CD4-positive, alpha-beta memory T cell (primary cell): ENCODE measurements at regions of chr12 and their contacts with region 1.

Region 1: GRCh38 chr12:113965951-113966797 is at the start of gene RBM19:
- DNase-seq: peak; percentile 97 to 98 (median 98)
- H3K4me3 ChIP-seq: peak within 1 kb of the TSS; percentile 72 to 93
- H3K4me3 Mint-ChIP-seq: peak within 1 kb of the TSS; percentile 97 to 100 (median 98)
- H3K27ac ChIP-seq: peak within 1 kb of the TSS; percentile 64
- H3K27ac Mint-ChIP-seq: peak within 1 kb of the TSS; percentile 89 to 97 (median 96)
- H3K4me1 ChIP-seq: peaks cover 38% of the 10 kb centered on the region
- H3K4me1 Mint-ChIP-seq: peaks cover 29 to 59% (median 48%) of the 10 kb centered on the region in 4 donors
- H3K27me3 ChIP-seq: no peaks in the 10 kb centered on the region
- H3K27me3 Mint-ChIP-seq: no peaks in the 10 kb centered on the region
- total RNA-seq, gene RBM19: 71.0 to 78.4 TPM

Region 2: GRCh38 chr12:113673458-113674238 is 292.5 kb before region 1 on chr12:
- CTCF ChIA-PET with region 1: no interaction called
- POLR2A ChIA-PET with region 1: no interaction called
- intact Hi-C with region 1: no loop called
- DNase-seq: no peak
- H3K4me3 ChIP-seq: no peak overlapping the region
- H3K4me3 Mint-ChIP-seq: no peak overlapping the region
- H3K27ac ChIP-seq: no peak overlapping the region
- H3K27ac Mint-ChIP-seq: no peak overlapping the region
- H3K4me1 ChIP-seq: no peaks in the 10 kb centered on the region
- H3K4me1 Mint-ChIP-seq: peaks cover 0 to 1% (median 0%) of the 10 kb centered on the region in 4 donors
- H3K27me3 ChIP-seq: no peaks in the 10 kb centered on the region
- H3K27me3 Mint-ChIP-seq: peaks cover 17 to 25% of the 10 kb centered on the region in 2 donors

Region 3: DNA sequence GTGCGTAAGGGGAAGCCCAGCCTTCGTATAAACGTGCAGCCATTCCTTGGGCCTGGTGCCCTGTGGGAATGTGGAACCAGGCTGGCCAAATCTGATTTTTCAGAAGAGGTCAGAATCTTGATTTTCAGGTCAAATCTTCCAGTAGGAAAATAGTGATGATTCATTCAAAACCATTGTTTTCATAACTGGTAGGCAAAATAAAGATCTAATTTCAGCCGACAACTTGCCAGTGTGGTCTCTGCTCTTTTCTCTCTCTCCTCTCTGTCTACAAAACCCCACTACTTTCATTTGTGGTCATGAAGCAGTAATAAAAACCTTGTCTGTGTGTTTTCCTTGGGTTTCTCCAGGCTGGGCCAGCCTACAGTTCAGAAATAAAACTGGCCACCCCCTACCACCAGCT is 135.2 kb before region 1 on chr12:
- CTCF ChIA-PET with region 1: no interaction called
- POLR2A ChIA-PET with region 1: no interaction called
- intact Hi-C with region 1: no loop called
- DNase-seq: no peak
- H3K4me3 ChIP-seq: no peak overlapping the region
- H3K4me3 Mint-ChIP-seq: no peak overlapping the region
- H3K27ac ChIP-seq: no peak overlapping the region
- H3K27ac Mint-ChIP-seq: peak overlapping the region in 1 of 7 donors; percentile 42
- H3K4me1 ChIP-seq: no peaks in the 10 kb centered on the region
- H3K4me1 Mint-ChIP-seq: no peaks in the 10 kb centered on the region
- H3K27me3 ChIP-seq: no peaks in the 10 kb centered on the region
- H3K27me3 Mint-ChIP-seq: no peaks in the 10 kb centered on the region

Region 4: GRCh38 chr12:113955109-113955970 is 10.8 kb before region 1 on chr12:
- CTCF ChIA-PET with region 1: interaction called, 12 read pairs
- POLR2A ChIA-PET with region 1: no interaction called
- intact Hi-C with region 1: no loop called
- DNase-seq: no peak
- H3K4me3 ChIP-seq: no peak overlapping the region
- H3K4me3 Mint-ChIP-seq: no peak overlapping the region
- H3K27ac ChIP-seq: no peak overlapping the region
- H3K27ac Mint-ChIP-seq: no peak overlapping the region
- H3K4me1 ChIP-seq: no peaks in the 10 kb centered on the region
- H3K4me1 Mint-ChIP-seq: peaks cover 0 to 4% (median 0%) of the 10 kb centered on the region in 4 donors
- H3K27me3 ChIP-seq: no peaks in the 10 kb centered on the region
- H3K27me3 Mint-ChIP-seq: no peaks in the 10 kb centered on the region

Region 5: GRCh38 chr12:113980537-113981337 is 14.6 kb after region 1 on chr12:
- CTCF ChIA-PET with region 1: interaction called, 30 read pairs
- POLR2A ChIA-PET with region 1: no interaction called
- intact Hi-C with region 1: no loop called
- DNase-seq: peak in 3 of 5 donors; percentile 10 to 15 (median 12)
- H3K4me3 ChIP-seq: no peak overlapping the region
- H3K4me3 Mint-ChIP-seq: no peak overlapping the region
- H3K27ac ChIP-seq: no peak overlapping the region
- H3K27ac Mint-ChIP-seq: no peak overlapping the region
- H3K4me1 ChIP-seq: no peaks in the 10 kb centered on the region
- H3K4me1 Mint-ChIP-seq: no peaks in the 10 kb centered on the region
- H3K27me3 ChIP-seq: no peaks in the 10 kb centered on the region
- H3K27me3 Mint-ChIP-seq: peaks cover 23 to 34% of the 10 kb centered on the region in 2 donors

Region 6: DNA sequence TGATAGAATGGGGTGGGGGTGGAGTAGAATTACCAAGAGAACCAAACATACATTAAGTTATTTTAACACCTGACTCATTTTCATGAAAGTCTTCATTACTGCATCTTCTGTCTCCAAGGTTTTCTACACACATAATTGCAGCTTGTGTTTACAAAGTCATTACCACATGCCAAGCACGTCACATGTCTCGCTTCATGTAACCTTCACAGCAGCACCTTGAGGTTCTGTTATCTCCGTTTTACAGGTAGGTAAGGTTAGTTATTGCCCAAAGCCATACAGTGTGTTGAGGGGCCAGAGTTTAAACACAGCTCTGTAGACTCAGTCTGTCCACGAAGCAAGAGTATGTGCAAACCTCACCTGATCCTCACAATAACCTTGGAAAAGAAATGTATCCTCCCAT is 64.3 kb after region 1 on chr12:
- CTCF ChIA-PET with region 1: no interaction called
- POLR2A ChIA-PET with region 1: no interaction called
- intact Hi-C with region 1: no loop called
- DNase-seq: no peak
- H3K4me3 ChIP-seq: no peak overlapping the region
- H3K4me3 Mint-ChIP-seq: no peak overlapping the region
- H3K27ac ChIP-seq: no peak overlapping the region
- H3K27ac Mint-ChIP-seq: no peak overlapping the region
- H3K4me1 ChIP-seq: no peaks in the 10 kb centered on the region
- H3K4me1 Mint-ChIP-seq: no peaks in the 10 kb centered on the region
- H3K27me3 ChIP-seq: no peaks in the 10 kb centered on the region
- H3K27me3 Mint-ChIP-seq: peaks cover 0 to 10% of the 10 kb centered on the region in 2 donors

Region 7: DNA sequence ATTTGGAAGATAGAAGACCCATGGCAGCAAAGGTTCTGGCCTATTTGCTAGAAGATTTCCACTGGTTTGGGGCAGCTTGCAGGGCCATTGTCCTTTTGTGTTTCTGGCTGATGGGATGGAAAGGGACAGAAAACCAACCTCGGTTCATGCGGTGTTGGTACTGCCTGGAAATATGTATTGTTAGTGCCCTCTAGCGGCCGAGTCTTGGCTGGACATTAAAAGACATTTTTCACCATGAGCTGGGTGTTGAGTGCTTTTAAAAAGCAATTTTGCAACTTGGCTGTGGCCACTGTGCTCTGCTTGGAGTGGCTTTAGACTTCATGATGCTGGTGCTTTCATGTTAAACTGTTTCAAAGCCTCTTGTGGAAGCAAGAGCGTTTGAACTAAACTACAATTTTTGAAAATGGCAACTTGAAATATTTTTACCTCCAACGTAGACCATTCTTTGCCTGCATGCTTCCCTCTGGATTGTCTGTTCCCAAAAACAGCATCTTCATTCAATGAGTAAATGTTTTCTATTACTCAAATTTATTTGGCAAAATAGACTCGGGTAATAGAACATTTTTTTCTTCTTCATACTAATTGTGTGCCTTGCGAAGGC is 542.5 kb after region 1 on chr12:
- CTCF ChIA-PET with region 1: interaction called, 48 read pairs
- POLR2A ChIA-PET with region 1: interaction called, 3 read pairs
- intact Hi-C with region 1: no loop called
- DNase-seq: peak; percentile 38 to 53 (median 51)
- H3K4me3 ChIP-seq: no peak overlapping the region
- H3K4me3 Mint-ChIP-seq: no peak overlapping the region
- H3K27ac ChIP-seq: no peak overlapping the region
- H3K27ac Mint-ChIP-seq: peak overlapping the region in 1 of 7 donors; percentile 7
- H3K4me1 ChIP-seq: no peaks in the 10 kb centered on the region
- H3K4me1 Mint-ChIP-seq: peaks cover 0 to 2% (median 0%) of the 10 kb centered on the region in 4 donors
- H3K27me3 ChIP-seq: no peaks in the 10 kb centered on the region
- H3K27me3 Mint-ChIP-seq: peaks cover 4 to 6% of the 10 kb centered on the region in 2 donors

Region 8: GRCh38 chr12:115916910-115917668 is 1950.9 kb after region 1 on chr12:
- CTCF ChIA-PET with region 1: interaction called, 6 read pairs
- POLR2A ChIA-PET with region 1: no interaction called
- intact Hi-C with region 1: loop called (anchors 1 kb)
- DNase-seq: peak; percentile 54 to 67 (median 64)
- H3K4me3 ChIP-seq: no peak overlapping the region
- H3K4me3 Mint-ChIP-seq: peak overlapping the region in 7 of 8 donors; percentile 8 to 49 (median 27)
- H3K27ac ChIP-seq: no peak overlapping the region
- H3K27ac Mint-ChIP-seq: peak overlapping the region in 1 of 7 donors; percentile 30
- H3K4me1 ChIP-seq: no peaks in the 10 kb centered on the region
- H3K4me1 Mint-ChIP-seq: peaks cover 0 to 4% (median 0%) of the 10 kb centered on the region in 4 donors
- H3K27me3 ChIP-seq: peaks cover 12% of the 10 kb centered on the region
- H3K27me3 Mint-ChIP-seq: peaks cover 21 to 42% of the 10 kb centered on the region in 2 donors